ENCODE measurements at regions of chrX and their contacts with region 1.

Region 1: GRCh38 chrX:25968920-25969319 is 169.2 kb upstream of the MAGEB18 start:
- DNase-seq: no peak
- ATAC-seq: no peak

Region 2: GRCh38 chrX:25523574-25524540 is 445.1 kb before region 1 on chrX:
- intact Hi-C with region 1: loop called in 1 of 2 experiments (anchors 10 kb)
- DNase-seq: no peak
- ATAC-seq: no peak

Region 3: DNA sequence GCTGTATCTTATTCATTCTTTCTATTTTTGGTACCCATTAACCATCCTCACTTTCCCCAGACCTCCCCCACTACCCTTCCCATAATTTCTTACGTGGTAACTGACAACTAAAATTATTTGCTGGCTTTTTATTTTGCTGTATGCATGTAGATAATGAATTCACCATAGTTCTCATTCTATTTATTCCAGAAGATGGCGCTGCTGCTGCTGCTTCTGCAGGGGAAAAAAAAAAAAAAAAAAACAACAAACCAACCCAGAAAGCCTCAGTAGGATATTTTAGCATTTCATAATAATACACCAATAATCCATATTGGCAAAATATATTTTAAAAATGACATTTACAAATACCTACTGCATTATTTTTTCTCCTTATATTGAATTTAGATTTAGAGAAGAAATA is 247.4 kb before region 1 on chrX:
- intact Hi-C with region 1: loop called in 1 of 2 experiments (anchors 5 kb)
- DNase-seq: no peak
- ATAC-seq: no peak

Region 4: DNA sequence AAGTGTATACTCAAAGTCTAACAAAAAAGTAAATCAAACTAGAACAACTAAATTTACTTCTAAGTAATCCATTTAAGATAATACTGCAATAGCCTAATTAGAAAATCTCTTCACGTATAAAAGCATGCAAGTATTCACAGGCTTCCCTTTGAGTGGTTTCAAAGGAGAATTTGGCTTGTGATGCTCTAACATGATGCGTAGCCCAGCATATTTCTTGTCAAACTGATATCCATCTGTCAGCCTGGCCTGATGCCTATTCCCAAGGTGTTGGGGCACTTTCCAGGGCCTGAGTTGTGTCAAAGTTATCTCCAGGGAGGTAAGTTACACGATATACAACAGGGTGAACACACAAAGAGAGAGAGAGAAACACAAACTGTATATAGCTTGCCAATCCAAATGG is 117.8 kb before region 1 on chrX:
- intact Hi-C with region 1: no loop called
- DNase-seq: no peak
- ATAC-seq: no peak

Measured in left cardiac atrium (tissue), 4 donors.